GM12878 (cell line): ENCODE measurements at regions of chr5 and their contacts with region 1.

Region 1: DNA sequence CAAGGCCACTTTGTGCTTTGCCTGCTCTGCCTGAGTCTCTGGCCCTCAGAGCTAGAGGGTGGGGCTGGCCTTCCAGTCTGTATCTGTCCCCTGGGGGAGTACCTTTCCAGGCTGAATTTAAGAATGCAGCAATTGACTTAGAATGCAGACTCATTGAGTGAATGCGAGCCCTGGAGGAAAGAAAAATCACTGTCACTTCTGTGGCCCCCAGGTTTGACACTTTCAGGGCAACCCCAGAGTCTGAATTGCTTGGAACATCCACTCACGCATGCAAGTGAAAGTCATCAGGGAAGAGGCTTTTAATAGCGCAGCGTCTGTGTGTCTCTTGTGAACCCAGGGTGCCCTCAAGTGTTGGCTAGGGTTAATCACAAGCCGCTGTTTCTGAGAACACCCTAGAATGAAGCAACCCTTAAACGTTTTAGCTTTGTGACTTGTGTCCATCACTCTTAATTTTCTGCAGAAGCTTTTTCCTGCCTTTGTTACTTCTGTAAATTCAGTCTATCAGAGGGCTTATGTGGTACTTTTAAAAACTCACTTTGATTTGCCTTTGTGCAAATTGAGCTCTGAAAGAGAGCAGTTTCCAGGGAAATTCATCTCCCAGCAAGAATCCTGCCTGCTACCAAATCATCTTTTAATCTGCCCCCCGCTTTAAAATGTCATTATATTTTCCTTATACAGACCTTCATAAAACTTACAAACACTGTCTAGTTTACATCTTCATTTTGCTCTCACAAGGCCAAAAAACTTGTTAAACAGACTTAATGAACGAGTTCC is 146.8 kb upstream of the IQGAP2 start:
- DNase-seq: no peak
- ATAC-seq: peak; percentile 98
- H3K4me3 ChIP-seq: no peak overlapping the region
- H3K27ac ChIP-seq: no peak overlapping the region
- H3K4me1 ChIP-seq: peaks cover 3% of the 10 kb centered on the region; the same call in 1 of the 2 replicates
- H3K27me3 ChIP-seq: no peaks in the 10 kb centered on the region
- CTCF ChIP-seq: peak; percentile 83 to 93 (median 85)
- EP300 ChIP-seq: no peak
- POLR2A ChIP-seq: no peak
- RAD21 ChIP-seq: peak; percentile 99

Region 2: GRCh38 chr5:74766849-74767578 is 1489.3 kb before region 1 on chr5 and contains the starts of genes GFM2 and NSA2:
- CTCF ChIA-PET with region 1: no interaction called
- POLR2A ChIA-PET with region 1: no interaction called
- RAD21 ChIA-PET with region 1: no interaction called
- SMC1A ChIA-PET with region 1: no interaction called
- in situ Hi-C with region 1: no loop called
- intact Hi-C with region 1: loop called (anchors 5 kb)
- DNase-seq: peak; percentile 88
- ATAC-seq: peak; percentile 85
- H3K4me3 ChIP-seq: peak within 1 kb of the TSS; percentile 94
- H3K27ac ChIP-seq: peak within 1 kb of the TSS; percentile 81
- H3K4me1 ChIP-seq: peaks cover 9% of the 10 kb centered on the region
- H3K27me3 ChIP-seq: no peaks in the 10 kb centered on the region
- CTCF ChIP-seq: no peak
- EP300 ChIP-seq: no peak; a peak in 1 of 4 replicates
- POLR2A ChIP-seq: peak; percentile 82
- RAD21 ChIP-seq: no peak
- polyA plus RNA-seq, gene GFM2: 19.9 to 26.0 TPM
- polyA plus RNA-seq, gene NSA2: 77.8 to 98.2 TPM

Region 3: DNA sequence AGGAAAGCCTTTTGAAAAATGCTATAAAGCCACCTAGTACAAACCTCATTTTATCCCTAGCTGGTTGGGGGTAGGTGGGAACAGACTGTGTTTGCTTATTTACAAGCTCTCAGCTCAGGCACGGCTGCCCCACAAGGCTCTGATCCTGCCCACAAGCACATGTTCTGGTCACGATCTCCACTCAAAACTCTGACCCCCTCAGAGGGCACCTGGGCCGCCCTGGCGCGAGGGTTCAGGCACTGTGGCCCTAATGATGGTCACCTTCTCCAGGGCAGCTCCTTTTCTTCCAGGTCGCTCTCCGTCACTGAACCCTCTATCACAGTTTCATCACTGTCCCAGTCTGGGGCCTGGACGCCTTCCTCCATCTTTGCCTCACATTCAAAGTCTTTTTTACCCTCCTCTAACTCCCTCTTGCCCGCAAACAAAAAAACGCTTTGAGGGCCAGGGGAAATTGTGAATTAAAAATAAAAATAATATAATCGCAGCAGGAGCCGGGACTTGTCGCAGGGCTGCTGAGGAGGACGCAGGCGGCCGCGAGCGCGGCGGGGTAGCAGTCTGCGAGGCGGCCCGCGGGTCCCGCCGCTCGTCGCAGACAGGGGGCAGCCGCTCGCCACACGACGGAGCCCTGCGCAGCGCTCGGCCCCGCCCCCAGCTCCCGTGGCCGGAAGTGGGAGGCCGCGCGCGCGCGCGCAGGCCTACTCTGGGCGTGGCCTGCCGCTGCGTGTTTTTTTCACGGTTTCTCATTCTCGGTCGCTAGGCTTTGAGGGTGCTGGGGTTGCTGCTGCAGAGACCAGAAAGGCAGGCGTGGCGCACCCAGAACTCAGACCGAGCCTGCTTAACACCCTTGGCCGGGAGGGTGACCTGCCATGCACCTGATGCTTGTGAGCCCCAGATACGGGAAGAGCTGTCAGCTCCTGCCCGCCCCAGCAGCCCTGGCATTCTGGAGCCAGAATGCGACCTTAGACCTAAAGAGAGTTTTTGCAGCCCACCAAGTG is 1019.7 kb before region 1 on chr5 and contains the start of gene ANKRD31:
- CTCF ChIA-PET with region 1: interaction called, 3 read pairs
- POLR2A ChIA-PET with region 1: no interaction called
- RAD21 ChIA-PET with region 1: no interaction called
- SMC1A ChIA-PET with region 1: no interaction called
- in situ Hi-C with region 1: no loop called
- intact Hi-C with region 1: loop called (anchors 5 kb)
- DNase-seq: peak; percentile 42
- ATAC-seq: peak; percentile 100
- H3K4me3 ChIP-seq: peak within 1 kb of the TSS; percentile 63
- H3K27ac ChIP-seq: no peak within 1 kb of the TSS
- H3K4me1 ChIP-seq: peaks cover 3% of the 10 kb centered on the region; the same call in 1 of the 2 replicates
- H3K27me3 ChIP-seq: no peaks in the 10 kb centered on the region
- CTCF ChIP-seq: peak; percentile 60 to 85 (median 72); a peak in 5 of 6 replicates
- EP300 ChIP-seq: peak in 1 of 2 experiments; percentile 16; a peak in 1 of 4 replicates
- POLR2A ChIP-seq: peak; percentile 71
- RAD21 ChIP-seq: peak; percentile 64
- polyA plus RNA-seq, gene ANKRD31: 0.02 TPM in 1 of 2 experiments, not detected in the other

Region 4: GRCh38 chr5:75694781-75695180 is 561.5 kb before region 1 on chr5:
- CTCF ChIA-PET with region 1: no interaction called
- POLR2A ChIA-PET with region 1: no interaction called
- RAD21 ChIA-PET with region 1: no interaction called
- SMC1A ChIA-PET with region 1: no interaction called
- in situ Hi-C with region 1: no loop called
- intact Hi-C with region 1: no loop called
- DNase-seq: no peak
- ATAC-seq: no peak
- H3K4me3 ChIP-seq: no peak overlapping the region
- H3K27ac ChIP-seq: no peak overlapping the region
- H3K4me1 ChIP-seq: no peaks in the 10 kb centered on the region
- H3K27me3 ChIP-seq: no peaks in the 10 kb centered on the region
- CTCF ChIP-seq: no peak
- EP300 ChIP-seq: no peak
- POLR2A ChIP-seq: no peak
- RAD21 ChIP-seq: no peak

Region 5: DNA sequence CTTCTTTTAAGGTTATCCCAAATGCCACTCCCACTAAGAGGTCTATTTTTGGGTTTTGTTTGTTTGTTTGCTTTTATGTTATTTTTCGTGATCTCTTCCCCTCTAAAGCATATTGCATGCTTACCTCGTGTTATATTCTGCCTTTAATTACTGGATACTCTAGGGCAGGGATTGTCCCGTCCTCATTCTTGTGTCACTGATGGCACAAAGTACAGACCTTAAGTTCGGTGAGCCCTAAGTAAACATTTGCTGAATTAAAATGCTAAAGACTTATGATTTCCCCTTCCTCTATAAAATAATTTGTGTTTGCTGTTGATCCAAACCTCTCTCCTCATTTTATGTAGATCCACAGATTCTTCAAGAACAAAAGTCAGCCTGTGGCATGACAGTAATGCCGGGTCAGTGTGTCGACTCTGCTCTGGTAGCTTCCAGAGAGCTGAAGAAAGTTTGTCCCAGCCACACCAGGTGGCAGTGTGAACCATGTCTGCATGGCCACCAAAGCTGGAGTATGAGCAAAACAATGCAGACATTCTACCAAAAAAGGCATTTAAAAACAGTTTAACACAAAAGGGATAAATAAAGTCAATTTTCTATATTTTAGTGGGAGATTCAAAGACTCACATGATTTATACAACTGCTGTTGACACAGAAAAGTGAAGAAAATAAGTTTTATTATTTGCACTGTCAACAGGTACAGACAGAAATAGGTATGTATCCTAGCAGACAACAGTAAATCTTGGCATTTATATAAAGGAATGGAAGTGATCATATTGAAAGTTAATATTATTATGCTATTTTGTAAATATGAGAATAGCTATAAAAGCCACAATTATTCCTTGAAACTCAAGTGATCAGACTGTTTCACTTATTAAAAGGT is 521.2 kb before region 1 on chr5:
- CTCF ChIA-PET with region 1: interaction called, 16 read pairs
- POLR2A ChIA-PET with region 1: no interaction called
- RAD21 ChIA-PET with region 1: interaction called, 4 read pairs
- SMC1A ChIA-PET with region 1: interaction called, 3 read pairs
- in situ Hi-C with region 1: loop called (anchors 5 kb)
- intact Hi-C with region 1: loop called (anchors 1 kb)
- DNase-seq: peak; percentile 5
- ATAC-seq: peak; percentile 81
- H3K4me3 ChIP-seq: no peak overlapping the region
- H3K27ac ChIP-seq: no peak overlapping the region
- H3K4me1 ChIP-seq: no peaks in the 10 kb centered on the region
- H3K27me3 ChIP-seq: no peaks in the 10 kb centered on the region
- CTCF ChIP-seq: peak; percentile 61 to 70 (median 67); a peak in 5 of 6 replicates
- EP300 ChIP-seq: no peak
- POLR2A ChIP-seq: no peak
- RAD21 ChIP-seq: peak; percentile 93

Region 6: DNA sequence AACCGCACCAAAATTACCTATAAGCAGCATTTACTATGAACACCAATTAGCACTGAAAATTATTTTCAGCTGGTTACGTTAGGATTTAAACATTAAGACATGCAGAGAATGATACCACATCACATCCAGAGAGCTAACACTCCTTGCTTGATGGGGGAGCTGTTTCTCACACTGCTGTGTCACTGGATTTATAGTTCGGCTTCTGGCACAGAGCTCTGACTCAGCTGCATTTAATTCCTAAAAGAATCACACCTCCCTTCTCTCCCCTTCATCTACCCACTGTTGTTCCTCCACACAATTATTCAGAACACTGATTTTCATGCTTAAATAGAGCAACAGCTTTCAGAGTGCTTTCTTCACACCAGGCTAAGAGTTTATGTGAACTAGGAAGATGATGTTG is 255.7 kb before region 1 on chr5:
- CTCF ChIA-PET with region 1: no interaction called
- POLR2A ChIA-PET with region 1: no interaction called
- RAD21 ChIA-PET with region 1: no interaction called
- SMC1A ChIA-PET with region 1: no interaction called
- in situ Hi-C with region 1: no loop called
- intact Hi-C with region 1: loop called (anchors 10 kb)
- DNase-seq: no peak
- ATAC-seq: no peak
- H3K4me3 ChIP-seq: no peak overlapping the region
- H3K27ac ChIP-seq: no peak overlapping the region
- H3K4me1 ChIP-seq: no peaks in the 10 kb centered on the region
- H3K27me3 ChIP-seq: no peaks in the 10 kb centered on the region
- CTCF ChIP-seq: no peak
- EP300 ChIP-seq: no peak
- POLR2A ChIP-seq: no peak
- RAD21 ChIP-seq: no peak

Region 7: GRCh38 chr5:76145945-76146344 is 110.4 kb before region 1 on chr5:
- CTCF ChIA-PET with region 1: interaction called, 10 read pairs
- POLR2A ChIA-PET with region 1: no interaction called
- RAD21 ChIA-PET with region 1: no interaction called
- SMC1A ChIA-PET with region 1: interaction called, 3 read pairs
- in situ Hi-C with region 1: no loop called
- intact Hi-C with region 1: no loop called
- DNase-seq: no peak
- ATAC-seq: peak; percentile 68
- H3K4me3 ChIP-seq: no peak overlapping the region
- H3K27ac ChIP-seq: no peak overlapping the region
- H3K4me1 ChIP-seq: no peaks in the 10 kb centered on the region
- H3K27me3 ChIP-seq: no peaks in the 10 kb centered on the region
- CTCF ChIP-seq: peak; percentile 21 to 46 (median 42)
- EP300 ChIP-seq: no peak
- POLR2A ChIP-seq: no peak
- RAD21 ChIP-seq: peak; percentile 49

Region 8: DNA sequence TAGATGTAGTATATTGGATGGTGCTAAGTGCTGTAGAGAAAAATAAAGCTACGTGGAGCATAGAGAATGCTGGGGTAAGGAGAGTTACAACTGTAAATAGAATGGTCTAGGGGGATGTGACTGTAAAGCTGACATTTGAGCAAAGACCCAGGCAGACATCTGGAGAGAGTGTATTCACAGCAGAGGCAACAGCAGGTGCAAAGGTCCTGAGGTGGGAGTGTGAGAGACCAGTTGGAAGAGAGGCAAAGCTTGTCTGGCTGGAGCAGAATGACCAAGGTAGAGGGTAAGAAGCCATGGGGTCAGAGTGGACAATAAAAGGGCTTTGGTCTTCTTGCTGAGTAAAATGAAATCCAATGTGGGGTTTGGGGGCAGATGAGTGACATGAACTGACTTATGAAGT is 53.9 kb after region 1 on chr5:
- CTCF ChIA-PET with region 1: interaction called, 4 read pairs
- POLR2A ChIA-PET with region 1: no interaction called
- RAD21 ChIA-PET with region 1: interaction called, 12 read pairs
- SMC1A ChIA-PET with region 1: no interaction called
- in situ Hi-C with region 1: no loop called
- intact Hi-C with region 1: no loop called
- DNase-seq: no peak
- ATAC-seq: no peak
- H3K4me3 ChIP-seq: no peak overlapping the region
- H3K27ac ChIP-seq: no peak overlapping the region
- H3K4me1 ChIP-seq: no peaks in the 10 kb centered on the region
- H3K27me3 ChIP-seq: no peaks in the 10 kb centered on the region
- CTCF ChIP-seq: no peak
- EP300 ChIP-seq: no peak
- POLR2A ChIP-seq: no peak
- RAD21 ChIP-seq: no peak

Region 9: DNA sequence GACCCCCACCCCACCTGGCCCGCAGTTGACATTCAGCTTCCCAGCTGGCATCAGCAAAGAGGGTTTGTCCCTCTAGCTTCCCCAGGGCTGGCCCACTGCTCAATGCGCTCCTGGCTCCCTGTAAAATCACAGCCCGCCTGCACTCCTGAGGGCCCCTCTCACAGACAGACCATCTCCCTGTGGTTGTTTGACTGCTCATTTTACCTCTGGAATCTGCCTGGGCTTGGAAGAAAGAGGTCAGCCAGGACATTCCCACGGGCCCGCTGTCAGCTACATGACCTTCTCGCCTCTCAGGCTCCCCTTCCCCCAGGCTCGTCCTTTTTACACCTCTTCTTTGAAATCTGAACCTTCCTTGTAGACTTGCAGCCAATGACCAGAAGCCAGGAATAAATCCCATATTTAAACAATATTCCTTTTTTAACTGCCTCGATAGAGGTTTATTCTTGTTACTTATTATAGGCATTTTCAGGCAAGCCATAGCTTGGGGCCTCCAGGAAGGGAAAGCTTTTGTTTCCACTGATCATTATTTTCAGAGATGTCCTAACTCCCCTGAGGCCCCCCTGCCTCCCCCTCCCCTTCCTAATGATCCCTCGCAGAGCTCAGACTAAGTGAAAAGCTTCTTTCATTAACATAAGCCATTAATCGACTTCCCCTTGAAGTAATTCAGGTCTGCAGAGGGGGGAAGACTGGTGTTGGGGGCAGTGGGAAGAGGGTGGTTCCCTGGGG is 70.4 kb after region 1 on chr5:
- CTCF ChIA-PET with region 1: no interaction called
- POLR2A ChIA-PET with region 1: no interaction called
- RAD21 ChIA-PET with region 1: no interaction called
- SMC1A ChIA-PET with region 1: no interaction called
- in situ Hi-C with region 1: no loop called
- intact Hi-C with region 1: no loop called
- DNase-seq: no peak
- ATAC-seq: no peak
- H3K4me3 ChIP-seq: no peak overlapping the region
- H3K27ac ChIP-seq: no peak overlapping the region
- H3K4me1 ChIP-seq: no peaks in the 10 kb centered on the region
- H3K27me3 ChIP-seq: no peaks in the 10 kb centered on the region
- CTCF ChIP-seq: no peak
- EP300 ChIP-seq: no peak
- POLR2A ChIP-seq: no peak
- RAD21 ChIP-seq: no peak

Region 10: DNA sequence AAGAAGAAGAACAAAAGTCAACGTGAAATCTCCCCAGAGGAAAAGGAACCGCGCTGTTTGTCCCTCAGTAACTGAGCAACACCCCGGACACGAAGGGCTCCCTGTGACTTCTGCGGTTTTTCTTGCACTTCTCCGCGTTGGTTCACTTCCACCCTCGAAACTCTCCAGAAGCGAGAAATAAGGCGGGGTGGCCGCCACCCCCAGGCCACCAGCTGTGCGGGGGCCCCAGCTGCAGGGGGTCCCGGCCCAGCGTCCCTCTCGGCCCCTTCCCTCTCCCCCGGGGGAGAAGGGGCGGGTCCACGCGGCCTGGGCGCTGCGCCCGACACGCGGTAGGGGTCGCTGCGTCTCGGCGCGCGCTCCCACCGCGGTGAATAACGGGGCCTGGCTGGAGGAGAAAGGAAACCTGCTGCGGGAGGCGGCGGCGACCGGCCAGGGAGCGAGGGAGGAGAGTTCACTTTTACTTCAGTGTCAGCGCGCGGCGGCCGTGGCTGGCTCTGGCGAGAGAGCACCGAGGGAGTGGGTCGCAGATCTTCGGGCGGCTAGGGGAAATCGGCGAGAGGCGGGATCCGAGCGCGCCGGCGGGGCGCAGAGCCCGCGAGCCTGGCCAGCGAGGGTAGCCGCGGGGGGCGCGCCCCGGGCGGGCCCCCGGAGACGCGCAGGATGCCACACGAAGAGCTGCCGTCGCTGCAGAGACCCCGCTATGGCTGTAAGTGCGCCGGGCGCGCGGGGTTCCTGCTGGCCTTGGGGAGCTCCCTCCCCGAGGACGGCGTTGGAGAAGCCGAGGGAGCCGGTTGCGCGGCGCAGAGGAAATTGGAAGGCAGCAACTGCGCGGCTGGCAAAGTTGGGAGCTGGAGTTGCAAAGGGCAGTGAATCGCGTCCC is 146.8 kb after region 1 on chr5 and contains the start of gene IQGAP2:
- CTCF ChIA-PET with region 1: no interaction called
- POLR2A ChIA-PET with region 1: no interaction called
- RAD21 ChIA-PET with region 1: no interaction called
- SMC1A ChIA-PET with region 1: no interaction called
- in situ Hi-C with region 1: no loop called
- intact Hi-C with region 1: no loop called
- DNase-seq: no peak
- ATAC-seq: peak; percentile 76
- H3K4me3 ChIP-seq: peak within 1 kb of the TSS; percentile 86
- H3K27ac ChIP-seq: peak within 1 kb of the TSS; percentile 91
- H3K4me1 ChIP-seq: peaks cover 25% of the 10 kb centered on the region
- H3K27me3 ChIP-seq: no peaks in the 10 kb centered on the region
- CTCF ChIP-seq: peak; percentile 78 to 93 (median 80)
- EP300 ChIP-seq: peak in 1 of 2 experiments; percentile 55; a peak in 1 of 4 replicates
- POLR2A ChIP-seq: peak; percentile 78
- RAD21 ChIP-seq: peak; percentile 68
- polyA plus RNA-seq, gene IQGAP2: 17.7 to 17.9 TPM